ENCODE measurements at regions of chr1 and their contacts with region 1.

Region 1: DNA sequence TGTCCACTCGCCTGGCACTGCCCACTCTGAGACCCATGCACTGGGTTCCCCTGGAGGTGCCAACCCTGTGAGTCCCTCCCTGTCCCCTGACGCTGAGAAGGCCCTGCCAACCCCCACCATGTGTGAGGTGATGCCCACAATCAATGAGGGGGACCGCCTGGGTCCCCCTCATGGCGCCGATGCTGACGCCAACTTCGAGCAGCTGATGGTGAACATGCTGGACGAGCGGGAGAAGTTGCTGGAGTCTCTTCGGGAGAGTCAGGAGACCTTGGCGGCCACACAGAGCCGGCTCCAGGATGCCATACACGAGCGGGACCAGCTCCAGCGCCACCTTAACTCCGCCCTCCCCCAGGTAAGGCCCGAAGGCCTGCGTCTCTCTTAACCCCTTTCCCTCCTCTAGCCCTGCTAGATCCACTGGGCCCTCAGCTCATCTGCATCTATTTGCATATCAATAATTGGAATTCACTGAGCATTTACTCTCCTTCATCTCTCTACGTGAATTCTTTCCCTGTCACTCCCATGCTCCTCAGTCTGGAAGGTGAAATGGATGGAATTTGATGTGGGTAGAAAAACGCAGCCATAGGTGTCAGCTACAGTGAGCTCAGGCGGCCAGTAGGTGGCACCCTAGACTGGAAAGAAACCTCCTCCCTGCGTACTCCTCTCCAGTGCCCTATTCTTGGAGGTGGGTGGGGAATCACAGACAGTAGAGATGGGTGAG is 12.8 kb downstream of the PPFIA4 start:
- DNase-seq: peak; percentile 82
- H3K4me3 Mint-ChIP-seq: no peak overlapping the region
- H3K27ac Mint-ChIP-seq: no peak overlapping the region
- H3K4me1 Mint-ChIP-seq: no peaks in the 10 kb centered on the region
- H3K27me3 Mint-ChIP-seq: peaks cover 2% of the 10 kb centered on the region

Region 2: GRCh38 chr1:203051841-203052324 is 12.8 kb after region 1 on chr1:
- CTCF ChIA-PET with region 1: interaction called, 24 read pairs
- intact Hi-C with region 1: no loop called
- DNase-seq: no peak
- H3K4me3 Mint-ChIP-seq: no peak overlapping the region
- H3K27ac Mint-ChIP-seq: no peak overlapping the region
- H3K4me1 Mint-ChIP-seq: no peaks in the 10 kb centered on the region
- H3K27me3 Mint-ChIP-seq: peaks cover 5% of the 10 kb centered on the region

Region 3: DNA sequence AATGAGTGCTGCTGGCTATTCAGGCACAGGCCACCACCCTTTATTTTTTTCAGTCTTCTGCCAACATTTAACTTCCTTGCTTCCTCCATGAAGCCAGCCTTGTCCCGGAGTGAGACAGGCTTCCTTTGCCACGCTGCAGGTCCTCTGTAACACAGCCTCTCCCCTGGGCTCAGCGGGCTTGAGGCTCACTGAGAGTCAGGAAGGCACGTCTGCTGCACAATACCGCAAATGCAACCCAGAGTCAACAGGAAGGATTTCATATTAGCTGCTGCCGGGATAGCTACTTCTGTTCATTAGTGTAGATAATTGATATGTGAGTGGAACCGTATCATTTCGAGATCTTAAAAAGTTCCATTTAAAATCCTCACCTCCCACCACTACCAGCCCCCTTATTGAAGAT is 24.2 kb after region 1 on chr1:
- CTCF ChIA-PET with region 1: interaction called, 10 read pairs
- intact Hi-C with region 1: no loop called
- DNase-seq: no peak
- H3K4me3 Mint-ChIP-seq: no peak overlapping the region
- H3K27ac Mint-ChIP-seq: no peak overlapping the region
- H3K4me1 Mint-ChIP-seq: no peaks in the 10 kb centered on the region
- H3K27me3 Mint-ChIP-seq: no peaks in the 10 kb centered on the region

Region 4: GRCh38 chr1:203117611-203118575 is 78.8 kb after region 1 on chr1:
- CTCF ChIA-PET with region 1: interaction called, 11 read pairs
- intact Hi-C with region 1: no loop called
- DNase-seq: peak; percentile 57
- H3K4me3 Mint-ChIP-seq: no peak overlapping the region
- H3K27ac Mint-ChIP-seq: no peak overlapping the region
- H3K4me1 Mint-ChIP-seq: no peaks in the 10 kb centered on the region
- H3K27me3 Mint-ChIP-seq: peaks cover 41% of the 10 kb centered on the region

Region 5: GRCh38 chr1:203216274-203217138 is 177.5 kb after region 1 on chr1:
- CTCF ChIA-PET with region 1: interaction called, 100 read pairs
- intact Hi-C with region 1: loop called (anchors 1 kb)
- DNase-seq: peak; percentile 72
- H3K4me3 Mint-ChIP-seq: no peak overlapping the region
- H3K27ac Mint-ChIP-seq: no peak overlapping the region
- H3K4me1 Mint-ChIP-seq: no peaks in the 10 kb centered on the region
- H3K27me3 Mint-ChIP-seq: peaks cover 7% of the 10 kb centered on the region

Region 6: GRCh38 chr1:203422116-203422515 is 383.1 kb after region 1 on chr1:
- CTCF ChIA-PET with region 1: no interaction called
- intact Hi-C with region 1: no loop called
- DNase-seq: no peak
- H3K4me3 Mint-ChIP-seq: no peak overlapping the region
- H3K27ac Mint-ChIP-seq: no peak overlapping the region
- H3K4me1 Mint-ChIP-seq: no peaks in the 10 kb centered on the region
- H3K27me3 Mint-ChIP-seq: peaks cover 13% of the 10 kb centered on the region